Calu3 (cell line): ENCODE measurements at regions of chr5 and their contacts with region 1.

Region 1: GRCh38 chr5:43947870-43948269 is 344.9 kb downstream of the NNT start:
- DNase-seq: no peak
- H3K4me3 Mint-ChIP-seq: no peak overlapping the region
- H3K27ac Mint-ChIP-seq: no peak overlapping the region
- H3K4me1 Mint-ChIP-seq: no peaks in the 10 kb centered on the region
- H3K27me3 Mint-ChIP-seq: no peaks in the 10 kb centered on the region
- CTCF ChIP-seq: no peak

Region 2: GRCh38 chr5:44246986-44247385 is 299.1 kb after region 1 on chr5:
- CTCF ChIA-PET with region 1: no interaction called
- intact Hi-C with region 1: loop called (anchors 10 kb)
- DNase-seq: no peak
- H3K4me3 Mint-ChIP-seq: no peak overlapping the region
- H3K27ac Mint-ChIP-seq: no peak overlapping the region
- H3K4me1 Mint-ChIP-seq: no peaks in the 10 kb centered on the region
- H3K27me3 Mint-ChIP-seq: no peaks in the 10 kb centered on the region
- CTCF ChIP-seq: no peak